Thyroid gland (tissue), 4 donors: ENCODE measurements at regions of chr17 and their contacts with region 1.

Region 1: GRCh38 chr17:65556014-65556909 is 5.2 kb downstream of the AXIN2 start:
- DNase-seq: peak; percentile 92 to 95
- H3K4me3 ChIP-seq: peak overlapping the region in 1 of 3 donors; percentile 1
- H3K27ac ChIP-seq: peak overlapping the region in 1 of 3 donors; percentile 50
- H3K4me1 ChIP-seq: peaks cover 0 to 17% of the 10 kb centered on the region in 2 donors
- H3K27me3 ChIP-seq: no peaks in the 10 kb centered on the region
- CTCF ChIP-seq: peak; percentile 74 to 95 (median 82)
- POLR2A ChIP-seq: peak in 1 of 2 donors; percentile 4

Region 2: DNA sequence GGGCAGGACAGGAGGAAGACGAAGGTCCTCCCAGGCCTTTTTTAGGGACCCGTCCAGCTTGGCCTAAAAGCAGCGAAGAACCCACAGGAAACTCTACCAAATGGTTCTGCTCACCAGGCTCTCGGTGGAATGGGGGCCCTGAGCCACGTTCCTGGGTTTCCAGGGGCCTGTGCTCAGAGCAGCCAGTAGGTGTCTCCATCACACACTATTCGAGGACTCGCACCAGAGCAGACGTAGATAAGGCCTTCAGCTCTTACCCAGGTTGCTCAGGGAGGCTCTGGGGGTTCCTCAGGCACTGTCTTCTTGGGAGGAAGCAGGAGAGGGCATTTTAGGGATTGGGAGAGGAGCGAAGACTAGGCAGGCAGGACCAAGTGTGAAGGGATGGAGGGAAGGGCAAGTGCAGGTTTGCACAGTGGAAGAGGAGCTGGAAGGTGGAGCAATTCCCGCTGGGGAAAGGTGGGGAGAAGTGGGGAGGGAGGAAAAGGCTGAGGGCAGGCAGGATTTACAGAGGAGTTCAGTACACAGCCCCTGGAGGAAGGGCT is 262.0 kb before region 1 on chr17:
- intact Hi-C with region 1: loop called (anchors 10 kb)
- DNase-seq: peak; percentile 64
- H3K4me3 ChIP-seq: no peak overlapping the region
- H3K27ac ChIP-seq: no peak overlapping the region
- H3K4me1 ChIP-seq: no peaks in the 10 kb centered on the region
- H3K27me3 ChIP-seq: no peaks in the 10 kb centered on the region
- CTCF ChIP-seq: peak; percentile 46 to 82 (median 76)
- POLR2A ChIP-seq: no peak

Region 3: DNA sequence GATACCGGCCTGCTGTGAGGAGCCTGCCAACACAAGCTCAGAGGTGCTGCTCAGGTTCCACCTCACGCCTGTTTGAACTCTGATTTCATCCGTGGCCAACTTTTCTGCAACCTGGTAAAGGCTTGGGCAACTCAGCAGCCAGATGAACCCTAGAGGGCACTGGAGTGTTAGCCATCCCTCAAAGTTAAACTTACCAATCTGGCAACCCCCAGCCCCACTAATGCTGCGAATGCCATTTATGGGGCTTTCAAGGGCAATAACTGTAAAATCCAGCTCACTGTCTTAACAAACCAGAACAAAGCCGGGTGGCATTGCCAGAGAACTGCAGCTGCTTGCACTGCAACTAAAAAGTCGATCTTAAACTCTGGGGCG is 100.3 kb before region 1 on chr17:
- intact Hi-C with region 1: loop called (anchors 5 kb)
- DNase-seq: peak; percentile 59 to 65
- H3K4me3 ChIP-seq: no peak overlapping the region
- H3K27ac ChIP-seq: peak overlapping the region in 1 of 3 donors; percentile 22
- H3K4me1 ChIP-seq: peaks cover 24 to 45% of the 10 kb centered on the region in 2 donors
- H3K27me3 ChIP-seq: no peaks in the 10 kb centered on the region
- CTCF ChIP-seq: peak in 4 of 6 experiments; percentile 15 to 67 (median 56)
- POLR2A ChIP-seq: no peak

Region 4: DNA sequence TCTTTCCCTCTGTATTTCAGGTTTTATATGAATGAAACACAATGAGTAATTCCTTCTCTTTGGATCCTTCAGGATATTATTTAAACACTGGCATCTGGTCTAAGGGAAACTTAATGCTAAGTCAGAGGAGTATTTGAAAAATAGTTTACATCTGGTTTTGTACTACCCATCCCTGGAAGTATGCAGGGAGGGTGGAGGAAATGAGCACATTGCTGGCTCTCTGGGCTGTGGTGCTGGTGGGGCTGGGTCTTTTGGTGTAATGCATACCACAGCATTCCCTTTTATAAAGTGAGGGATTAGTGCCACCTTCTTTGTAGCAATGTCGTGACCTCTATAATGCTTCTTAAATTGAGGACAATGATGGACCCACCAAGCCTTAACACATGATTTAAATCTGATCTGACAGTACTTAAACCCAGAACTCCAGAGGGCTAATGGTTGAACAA is 110.6 kb after region 1 on chr17:
- intact Hi-C with region 1: no loop called
- DNase-seq: no peak
- H3K4me3 ChIP-seq: no peak overlapping the region
- H3K27ac ChIP-seq: no peak overlapping the region
- H3K4me1 ChIP-seq: no peaks in the 10 kb centered on the region
- H3K27me3 ChIP-seq: no peaks in the 10 kb centered on the region
- CTCF ChIP-seq: no peak
- POLR2A ChIP-seq: no peak

Region 5: DNA sequence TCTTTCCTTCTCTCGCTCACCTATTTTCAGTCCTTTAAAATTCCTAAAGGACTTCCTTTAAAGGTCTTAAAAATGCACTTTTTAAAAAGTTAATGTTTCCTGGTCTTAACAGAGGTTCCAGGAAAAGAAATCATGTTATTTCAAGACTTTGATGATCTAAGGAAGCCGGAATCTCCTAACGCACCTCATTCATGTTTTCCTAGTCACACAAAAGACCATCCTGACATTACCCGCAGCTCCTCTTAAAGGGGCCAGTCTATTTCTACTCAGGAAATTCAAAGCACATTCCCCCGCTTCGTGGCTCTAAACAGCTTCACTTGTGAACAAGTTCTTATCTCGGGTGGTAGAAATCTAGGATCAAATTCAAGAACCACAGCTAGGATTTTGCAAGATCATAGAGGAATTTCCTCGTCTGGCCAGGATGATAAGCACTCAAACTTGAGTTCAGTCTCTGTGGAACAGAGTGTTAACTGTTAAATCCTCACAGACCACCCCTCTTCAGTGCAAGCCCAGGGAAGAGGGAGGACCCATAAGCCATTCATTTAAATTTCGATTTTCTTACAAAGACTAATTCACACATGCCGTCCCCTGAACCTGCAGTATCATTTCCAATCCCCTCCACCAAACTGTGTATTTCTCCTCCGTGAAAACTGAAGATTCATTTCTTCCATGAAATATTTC is 142.3 kb after region 1 on chr17:
- intact Hi-C with region 1: no loop called
- DNase-seq: no peak
- H3K4me3 ChIP-seq: no peak overlapping the region
- H3K27ac ChIP-seq: no peak overlapping the region
- H3K4me1 ChIP-seq: peaks cover 0 to 4% of the 10 kb centered on the region in 2 donors
- H3K27me3 ChIP-seq: no peaks in the 10 kb centered on the region
- CTCF ChIP-seq: no peak
- POLR2A ChIP-seq: no peak

Region 6: GRCh38 chr17:65794572-65794971 is 238.3 kb after region 1 on chr17:
- intact Hi-C with region 1: loop called (anchors 5 kb)
- DNase-seq: peak in 1 of 2 donors; percentile 19
- H3K4me3 ChIP-seq: no peak overlapping the region
- H3K27ac ChIP-seq: no peak overlapping the region
- H3K4me1 ChIP-seq: no peaks in the 10 kb centered on the region
- H3K27me3 ChIP-seq: no peaks in the 10 kb centered on the region
- CTCF ChIP-seq: peak in 5 of 6 experiments; percentile 21 to 73 (median 56)
- POLR2A ChIP-seq: no peak